ENCODE measurements at regions of chr15 and their contacts with region 1.

Region 1: GRCh38 chr15:91055548-91056331 is 33.3 kb upstream of the VPS33B start:
- DNase-seq: peak; percentile 81
- H3K4me3 Mint-ChIP-seq: no peak overlapping the region
- H3K27ac Mint-ChIP-seq: no peak overlapping the region
- H3K4me1 Mint-ChIP-seq: peaks cover 3% of the 10 kb centered on the region
- H3K27me3 Mint-ChIP-seq: peaks cover 69% of the 10 kb centered on the region

Region 2: GRCh38 chr15:91018158-91018557 is 37.6 kb before region 1 on chr15:
- intact Hi-C with region 1: no loop called
- DNase-seq: no peak
- H3K4me3 Mint-ChIP-seq: no peak overlapping the region
- H3K27ac Mint-ChIP-seq: peak overlapping the region; percentile 56
- H3K4me1 Mint-ChIP-seq: peaks cover 38% of the 10 kb centered on the region
- H3K27me3 Mint-ChIP-seq: no peaks in the 10 kb centered on the region

Region 3: DNA sequence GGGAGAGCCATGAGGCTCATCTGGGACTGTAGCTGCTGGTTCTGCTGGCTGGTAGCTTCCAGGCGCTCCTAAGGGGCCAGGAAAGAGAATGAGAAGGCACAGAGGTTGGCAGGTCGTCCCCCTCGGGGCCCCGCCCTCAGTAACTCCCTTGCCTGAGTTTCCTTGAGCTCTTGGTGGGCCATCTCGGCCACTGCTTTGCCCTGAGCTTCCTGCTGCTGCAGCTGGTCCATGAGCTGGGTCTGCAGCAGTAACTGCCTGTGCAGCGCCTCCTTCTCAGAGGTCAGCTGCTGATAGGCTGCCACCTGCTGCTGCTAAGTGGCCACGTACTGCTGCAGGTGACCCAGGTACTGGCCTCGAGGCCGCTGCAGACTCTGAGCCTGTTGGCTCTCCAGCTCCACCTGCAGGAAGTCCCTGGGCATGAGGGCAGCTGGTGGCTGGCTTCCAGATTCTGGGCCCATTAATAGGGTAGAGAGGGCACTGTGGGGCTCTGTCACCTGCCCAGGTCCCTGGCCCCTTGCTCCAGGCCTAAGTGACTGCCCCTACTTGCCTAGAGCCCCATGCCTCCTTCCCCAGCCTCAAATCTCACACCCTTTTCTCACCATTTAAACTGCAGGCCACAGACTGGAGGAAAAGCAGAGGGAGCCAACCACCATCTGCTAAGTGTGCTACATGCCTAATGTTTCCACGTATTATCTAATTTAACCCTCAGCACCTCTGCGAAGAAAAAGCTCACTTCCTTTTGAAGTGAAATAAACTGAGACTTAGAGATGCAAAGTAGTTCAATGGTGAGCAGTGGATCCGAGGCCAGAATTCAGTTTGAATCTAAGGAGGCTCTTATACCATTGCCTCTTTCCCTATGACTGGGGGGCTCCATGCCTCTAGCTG is 22.6 kb before region 1 on chr15:
- intact Hi-C with region 1: no loop called
- DNase-seq: peak; percentile 90
- H3K4me3 Mint-ChIP-seq: no peak overlapping the region
- H3K27ac Mint-ChIP-seq: no peak overlapping the region
- H3K4me1 Mint-ChIP-seq: peaks cover 10% of the 10 kb centered on the region
- H3K27me3 Mint-ChIP-seq: peaks cover 14% of the 10 kb centered on the region

Region 4: DNA sequence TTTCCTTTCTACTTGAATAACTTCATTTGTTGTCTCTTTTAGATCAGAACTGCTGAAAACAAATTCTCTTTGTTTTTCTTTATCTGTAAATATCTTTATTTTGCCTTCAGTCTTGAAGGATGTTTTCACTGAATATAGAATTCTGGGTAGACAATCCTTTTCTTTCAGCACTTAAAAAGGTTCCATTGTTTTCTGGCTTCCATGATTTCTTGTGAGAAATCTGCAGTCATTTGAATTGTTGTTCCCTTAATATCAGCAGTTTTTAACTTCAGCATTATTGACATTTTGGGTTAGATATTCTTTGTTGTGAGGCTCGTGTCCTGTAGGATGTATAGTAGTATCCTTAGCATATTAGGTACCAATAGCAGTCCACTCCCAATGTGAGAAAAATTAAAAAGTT is 110.1 kb after region 1 on chr15:
- intact Hi-C with region 1: no loop called
- DNase-seq: no peak
- H3K4me3 Mint-ChIP-seq: no peak overlapping the region
- H3K27ac Mint-ChIP-seq: no peak overlapping the region
- H3K4me1 Mint-ChIP-seq: no peaks in the 10 kb centered on the region
- H3K27me3 Mint-ChIP-seq: peaks cover 7% of the 10 kb centered on the region

Region 5: DNA sequence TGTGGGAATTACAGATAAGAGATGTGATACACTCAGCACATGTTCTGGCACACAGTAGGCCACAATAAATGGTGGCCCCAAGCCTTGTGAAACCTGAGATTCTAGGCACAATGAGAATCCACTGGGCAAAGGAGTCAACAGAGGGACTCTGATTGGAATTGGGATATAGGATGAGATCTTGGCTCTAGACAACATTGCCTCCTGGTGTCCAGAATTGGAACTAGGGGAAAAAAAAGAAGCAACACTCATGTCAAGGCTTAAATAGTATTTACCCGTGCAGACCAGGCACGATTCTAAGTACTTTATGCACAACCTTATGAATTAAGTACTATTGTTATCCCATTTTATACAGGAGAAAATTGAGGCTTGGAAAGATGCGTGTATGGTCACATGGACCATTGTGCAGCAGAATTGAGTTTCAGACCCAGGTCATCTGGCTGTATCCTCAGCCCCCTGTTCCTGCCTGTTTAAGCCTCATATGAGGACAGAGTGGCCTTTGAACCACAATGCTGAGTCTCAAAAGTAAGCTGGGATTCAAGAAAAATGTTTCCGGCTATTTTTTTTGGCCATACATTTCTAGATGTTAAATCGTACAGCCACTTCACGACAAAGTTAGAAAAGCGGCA is 169.1 kb after region 1 on chr15:
- intact Hi-C with region 1: loop called (anchors 1 kb)
- DNase-seq: peak; percentile 60
- H3K4me3 Mint-ChIP-seq: no peak overlapping the region
- H3K27ac Mint-ChIP-seq: no peak overlapping the region
- H3K4me1 Mint-ChIP-seq: no peaks in the 10 kb centered on the region
- H3K27me3 Mint-ChIP-seq: peaks cover 15% of the 10 kb centered on the region

Region 6: DNA sequence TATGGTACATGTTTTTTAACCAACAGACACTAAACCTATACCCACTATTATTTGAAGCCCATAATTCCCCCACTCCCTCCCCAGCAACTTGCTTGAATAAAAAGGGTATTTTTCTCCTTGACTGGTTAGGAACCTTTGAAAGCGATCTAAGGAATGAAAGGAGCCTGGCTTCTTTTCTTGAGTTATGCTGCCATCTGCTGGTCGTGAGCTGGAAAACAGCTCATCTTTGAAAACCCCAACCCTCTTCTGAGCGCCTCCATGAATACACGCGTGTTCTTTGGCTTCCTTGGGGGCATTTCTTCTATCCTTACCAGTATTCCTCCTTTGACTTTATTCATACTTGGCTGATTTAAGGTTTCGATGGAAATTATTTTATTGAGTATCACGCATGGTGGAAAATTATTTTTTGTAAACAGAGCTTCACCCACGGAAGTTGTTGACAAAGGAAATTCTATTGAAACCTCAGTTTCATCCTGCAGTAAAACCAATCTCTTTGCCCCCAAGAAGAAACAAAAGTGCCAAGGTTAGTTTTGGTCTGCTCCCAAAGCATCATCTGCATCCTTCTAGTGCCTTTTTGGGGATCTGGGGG is 215.9 kb after region 1 on chr15:
- intact Hi-C with region 1: loop called (anchors 1 kb)
- DNase-seq: peak; percentile 87
- H3K4me3 Mint-ChIP-seq: peak overlapping the region; percentile 58
- H3K27ac Mint-ChIP-seq: no peak overlapping the region
- H3K4me1 Mint-ChIP-seq: peaks cover 8% of the 10 kb centered on the region
- H3K27me3 Mint-ChIP-seq: peaks cover 43% of the 10 kb centered on the region

Measured in activated CD4-positive, alpha-beta T cell treated with anti-CD3 and anti-CD28 coated beads, Interleukin-2, amount 10 ng/mL, durations not matched to agents 24 days and 14 days (primary cell).